HEK293 (cell line): ENCODE measurements at regions of chr15 and their contacts with region 1.

Region 1: GRCh38 chr15:74044267-74045110 is 37.9 kb downstream of the GOLGA6A start:
- H3K4me3 ChIP-seq: no peak overlapping the region
- H3K27ac ChIP-seq: no peak overlapping the region
- H3K4me1 ChIP-seq: no peaks in the 10 kb centered on the region; the same call in 1 of the 2 replicates
- CTCF ChIP-seq: no peak

Region 2: GRCh38 chr15:73858062-73858461 is 186.4 kb before region 1 on chr15:
- CTCF ChIA-PET with region 1: no interaction called
- POLR2A ChIA-PET with region 1: no interaction called
- H3K4me3 ChIP-seq: no peak overlapping the region
- H3K27ac ChIP-seq: no peak overlapping the region
- H3K4me1 ChIP-seq: no peaks in the 10 kb centered on the region
- CTCF ChIP-seq: no peak

Region 3: DNA sequence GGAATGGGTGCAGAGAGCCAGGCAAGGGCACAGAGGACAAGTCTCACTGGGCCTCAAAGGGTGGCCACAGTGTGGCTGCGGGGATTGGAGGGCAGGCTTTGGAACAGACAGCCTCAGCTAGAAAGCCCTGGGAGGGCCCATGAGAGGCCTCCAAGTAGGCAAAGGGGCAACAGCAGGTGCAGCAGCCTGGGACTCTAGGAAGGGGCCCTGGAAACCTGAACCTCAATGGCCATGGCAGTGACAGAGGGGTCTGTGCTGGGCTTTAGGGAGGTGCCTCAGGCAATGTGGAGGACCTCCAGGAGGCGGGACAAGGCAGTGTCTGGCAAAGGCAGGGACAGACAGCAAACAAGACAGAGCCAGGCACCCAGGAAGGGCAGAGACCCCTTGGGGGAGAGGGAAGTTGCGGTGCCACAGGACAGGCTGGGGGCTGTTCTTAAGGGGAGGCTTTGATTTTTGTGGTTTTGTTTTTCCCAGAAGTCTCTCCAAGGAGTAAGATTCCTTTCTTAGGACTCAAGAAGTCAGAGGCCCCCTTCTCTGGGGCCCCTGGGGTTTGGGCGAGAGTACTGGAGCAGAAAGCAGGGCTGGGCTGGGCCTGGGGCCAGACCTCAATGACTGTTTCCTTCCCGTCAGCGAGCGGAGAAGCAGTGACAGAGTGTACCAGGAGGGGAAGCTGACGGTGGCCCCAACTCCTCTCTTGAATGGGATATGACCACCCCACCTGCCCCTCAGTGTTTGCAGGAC is 62.1 kb before region 1 on chr15:
- CTCF ChIA-PET with region 1: interaction called, 15 read pairs
- POLR2A ChIA-PET with region 1: interaction called, 3 read pairs
- H3K4me3 ChIP-seq: no peak overlapping the region
- H3K27ac ChIP-seq: peak overlapping the region; percentile 24; the same call in 1 of the 2 replicates
- H3K4me1 ChIP-seq: peaks cover 12% of the 10 kb centered on the region
- CTCF ChIP-seq: no peak